ENCODE measurements at regions of chr10 and their contacts with region 1.

Region 1: DNA sequence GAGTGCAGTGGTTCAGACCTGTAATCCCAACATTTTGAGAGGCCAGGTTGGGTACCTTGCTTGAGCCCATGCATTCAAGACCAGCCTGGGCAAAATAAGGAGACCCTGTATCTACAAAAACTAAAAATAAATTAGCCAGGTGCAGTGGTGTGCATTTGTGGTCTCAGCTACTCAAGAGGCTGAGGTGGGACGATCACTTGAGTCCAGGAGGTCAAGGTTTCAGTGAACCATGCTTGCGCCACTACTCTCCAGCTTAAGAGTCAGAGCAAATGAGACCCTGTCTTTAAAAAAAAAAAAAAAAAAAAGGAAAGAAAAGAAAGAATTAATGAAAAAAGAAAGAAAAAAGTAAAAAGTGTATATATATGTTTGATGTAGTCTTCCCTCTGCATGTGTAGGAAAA is 24.7 kb downstream of the MICU1 start:
- DNase-seq: no peak
- H3K4me3 ChIP-seq: no peak overlapping the region
- H3K4me3 Mint-ChIP-seq: no peak overlapping the region
- H3K27ac Mint-ChIP-seq: no peak overlapping the region
- H3K4me1 ChIP-seq: no peaks in the 10 kb centered on the region
- H3K4me1 Mint-ChIP-seq: no peaks in the 10 kb centered on the region
- H3K27me3 ChIP-seq: no peaks in the 10 kb centered on the region
- H3K27me3 Mint-ChIP-seq: no peaks in the 10 kb centered on the region
- CTCF ChIP-seq: no peak

Region 2: GRCh38 chr10:72545546-72545945 is 55.6 kb before region 1 on chr10:
- CTCF ChIA-PET with region 1: no interaction called
- POLR2A ChIA-PET with region 1: interaction called, 12 read pairs
- intact Hi-C with region 1: no loop called
- DNase-seq: no peak
- H3K4me3 ChIP-seq: no peak overlapping the region
- H3K4me3 Mint-ChIP-seq: no peak overlapping the region
- H3K27ac Mint-ChIP-seq: no peak overlapping the region
- H3K4me1 ChIP-seq: no peaks in the 10 kb centered on the region
- H3K4me1 Mint-ChIP-seq: peaks cover 6% of the 10 kb centered on the region
- H3K27me3 ChIP-seq: no peaks in the 10 kb centered on the region
- H3K27me3 Mint-ChIP-seq: no peaks in the 10 kb centered on the region
- CTCF ChIP-seq: no peak

Region 3: GRCh38 chr10:72612203-72612826 is 11.2 kb after region 1 on chr10:
- CTCF ChIA-PET with region 1: no interaction called
- POLR2A ChIA-PET with region 1: no interaction called
- intact Hi-C with region 1: no loop called
- DNase-seq: no peak
- H3K4me3 ChIP-seq: no peak overlapping the region
- H3K4me3 Mint-ChIP-seq: no peak overlapping the region
- H3K27ac Mint-ChIP-seq: no peak overlapping the region
- H3K4me1 ChIP-seq: no peaks in the 10 kb centered on the region
- H3K4me1 Mint-ChIP-seq: no peaks in the 10 kb centered on the region
- H3K27me3 ChIP-seq: no peaks in the 10 kb centered on the region
- H3K27me3 Mint-ChIP-seq: no peaks in the 10 kb centered on the region
- CTCF ChIP-seq: no peak